Esophagus squamous epithelium (tissue), 5 donors: ENCODE measurements at regions of chr15 and their contacts with region 1.

Region 1: GRCh38 chr15:71455107-71455506 is 339.8 kb downstream of the THSD4 start:
- DNase-seq: no peak
- H3K4me3 ChIP-seq: no peak overlapping the region
- H3K27ac ChIP-seq: peak overlapping the region in 3 of 4 donors; percentile 22 to 51 (median 46)
- H3K4me1 ChIP-seq: peaks cover 9 to 74% (median 35%) of the 10 kb centered on the region in 3 donors
- H3K27me3 ChIP-seq: no peaks in the 10 kb centered on the region
- CTCF ChIP-seq: no peak
- POLR2A ChIP-seq: no peak

Region 2: DNA sequence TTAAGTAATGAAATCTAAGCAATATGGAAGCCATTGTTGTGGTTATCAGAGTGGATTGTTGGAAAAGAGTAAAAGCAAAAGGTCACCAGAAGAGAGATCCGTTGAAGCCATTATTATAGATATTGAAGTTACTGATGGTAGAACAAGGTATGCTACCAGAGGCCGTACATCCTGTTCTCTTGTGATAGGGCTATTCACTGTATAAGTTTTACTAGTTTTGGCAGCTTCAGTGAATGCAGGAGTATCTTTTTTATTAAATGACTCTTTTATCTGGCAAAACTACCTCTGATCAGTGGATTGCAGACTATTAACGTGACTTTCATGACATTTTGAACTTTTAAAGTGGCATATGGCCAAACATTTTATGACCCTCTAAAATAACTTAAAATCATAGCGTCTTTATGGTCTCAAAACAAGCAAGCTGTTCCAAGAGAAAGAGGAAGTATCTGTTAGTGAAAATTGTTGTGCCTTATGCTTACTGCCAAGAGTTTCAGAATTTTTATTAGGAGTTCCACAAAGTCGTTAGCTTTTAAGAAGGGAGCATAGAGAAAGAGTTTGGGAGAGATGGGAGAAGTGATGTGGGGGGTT is 459.6 kb before region 1 on chr15:
- intact Hi-C with region 1: no loop called
- DNase-seq: no peak
- H3K4me3 ChIP-seq: no peak overlapping the region
- H3K27ac ChIP-seq: no peak overlapping the region
- H3K4me1 ChIP-seq: no peaks in the 10 kb centered on the region
- H3K27me3 ChIP-seq: no peaks in the 10 kb centered on the region
- CTCF ChIP-seq: no peak
- POLR2A ChIP-seq: no peak

Region 3: DNA sequence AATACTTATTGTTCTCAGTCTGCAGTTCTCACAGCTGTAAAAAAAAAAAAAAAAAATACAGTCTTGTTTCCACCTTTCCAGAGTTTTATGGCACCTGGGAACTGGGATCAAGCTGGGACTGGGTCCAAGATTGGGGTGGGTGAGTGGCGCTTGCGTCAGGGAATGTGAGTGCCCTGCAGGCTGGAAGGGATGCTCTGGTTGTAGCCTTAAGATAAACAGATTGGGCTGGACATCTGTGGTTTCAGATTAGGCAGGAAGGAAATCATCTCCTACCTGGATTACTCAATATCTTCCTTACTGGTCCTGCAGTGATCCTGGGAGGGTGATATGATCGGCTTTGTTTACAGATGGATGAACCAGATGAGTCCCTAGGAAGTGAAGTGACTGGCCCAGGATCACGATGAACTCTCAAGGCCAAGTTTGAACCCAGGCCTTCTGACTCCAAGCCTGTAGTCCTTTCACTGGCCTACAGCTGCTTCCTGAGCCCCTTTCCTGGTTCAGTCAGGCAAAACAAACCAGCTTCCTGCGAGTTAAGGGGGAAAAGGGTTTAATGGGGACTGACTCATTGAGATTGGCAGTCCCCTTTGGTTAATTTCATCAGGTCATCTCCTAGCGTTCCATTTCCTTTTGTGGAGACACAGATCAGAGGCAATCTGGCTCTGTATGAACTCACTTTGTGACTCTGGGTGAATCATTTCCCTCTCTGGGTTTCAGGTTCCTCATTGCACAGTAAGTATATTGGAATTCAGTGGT is 160.0 kb before region 1 on chr15:
- intact Hi-C with region 1: no loop called
- DNase-seq: no peak
- H3K4me3 ChIP-seq: no peak overlapping the region
- H3K27ac ChIP-seq: peak overlapping the region; percentile 63 to 79 (median 78)
- H3K4me1 ChIP-seq: peaks cover 5 to 28% (median 15%) of the 10 kb centered on the region in 3 donors
- H3K27me3 ChIP-seq: no peaks in the 10 kb centered on the region
- CTCF ChIP-seq: no peak
- POLR2A ChIP-seq: no peak

Region 4: DNA sequence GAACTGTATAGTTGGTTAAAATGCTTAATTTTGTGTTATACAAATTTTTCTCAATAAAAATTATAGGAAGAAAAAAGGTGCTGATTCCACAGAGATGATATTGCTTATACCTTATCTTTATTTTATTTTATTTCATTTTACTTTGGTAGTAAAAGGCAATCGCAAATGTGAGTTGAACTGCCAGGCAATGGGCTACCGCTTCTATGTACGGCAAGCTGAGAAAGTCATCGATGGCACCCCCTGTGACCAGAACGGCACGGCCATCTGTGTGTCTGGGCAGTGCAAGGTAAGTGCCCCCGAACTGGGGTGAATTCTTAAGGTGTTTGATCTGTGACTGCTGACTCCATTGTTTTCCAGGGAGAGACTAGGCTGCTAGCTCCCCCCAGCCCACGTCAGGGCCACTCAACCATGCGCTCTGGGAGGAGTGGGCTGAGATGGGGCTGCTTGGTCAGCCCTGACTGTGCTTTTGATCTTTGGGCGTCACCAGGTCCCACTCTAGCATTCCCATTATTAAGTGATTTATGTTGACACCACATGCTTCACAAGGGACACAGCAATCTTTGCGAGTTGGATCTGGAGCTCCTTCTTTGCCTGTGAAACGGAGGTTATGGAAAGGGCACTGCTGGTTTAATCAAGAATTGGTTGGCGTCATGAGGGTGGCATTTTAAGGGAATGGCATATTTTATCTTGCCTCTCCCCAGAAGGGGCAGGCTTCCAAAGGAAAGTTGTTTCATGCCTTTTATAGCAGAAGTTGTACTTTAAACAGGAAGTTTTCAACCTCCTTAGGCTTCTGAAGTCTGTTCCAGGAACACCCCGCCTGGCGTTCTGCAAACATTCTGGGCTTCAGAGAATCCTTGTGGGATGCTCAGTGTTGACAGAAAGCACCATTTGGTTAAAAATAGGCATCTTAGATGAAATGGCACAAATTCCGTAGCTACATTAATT is 43.3 kb before region 1 on chr15:
- intact Hi-C with region 1: no loop called
- DNase-seq: no peak
- H3K4me3 ChIP-seq: peak overlapping the region in 1 of 4 donors; percentile 26
- H3K27ac ChIP-seq: peak overlapping the region; percentile 30 to 87 (median 72)
- H3K4me1 ChIP-seq: peaks cover 0 to 16% (median 3%) of the 10 kb centered on the region in 3 donors
- H3K27me3 ChIP-seq: no peaks in the 10 kb centered on the region
- CTCF ChIP-seq: peak in 2 of 6 experiments; percentile 23 to 29
- POLR2A ChIP-seq: no peak

Region 5: DNA sequence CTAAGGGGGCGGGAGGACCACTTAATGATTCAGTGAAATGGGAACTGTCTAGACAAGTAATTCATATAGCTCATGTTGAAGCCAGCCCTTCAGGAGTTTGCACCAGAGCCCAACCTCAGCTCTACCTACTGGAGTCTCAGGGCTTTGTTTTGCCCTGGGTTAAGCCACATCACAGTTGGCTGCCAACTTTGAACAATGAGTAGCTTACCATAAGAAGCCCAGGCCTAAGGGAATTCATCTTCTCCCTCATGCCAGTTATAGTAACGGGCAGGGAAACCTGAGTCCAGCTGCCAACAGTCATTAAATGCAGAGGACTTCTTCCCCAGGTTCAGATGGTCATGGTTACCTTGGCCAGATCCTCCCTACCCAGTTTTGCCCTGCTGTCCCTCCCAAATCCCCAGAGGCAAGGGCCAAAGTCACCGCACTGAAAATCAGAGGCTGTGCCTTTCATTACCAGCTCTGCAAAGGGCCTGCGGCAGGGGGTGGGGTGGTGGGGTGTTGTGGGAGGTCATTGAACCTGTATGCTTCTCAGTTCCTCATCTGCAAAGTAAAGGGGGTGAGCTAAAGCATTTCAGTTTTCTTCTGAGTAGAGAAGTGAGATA is 53.1 kb after region 1 on chr15:
- intact Hi-C with region 1: loop called (anchors 10 kb)
- DNase-seq: no peak
- H3K4me3 ChIP-seq: no peak overlapping the region
- H3K27ac ChIP-seq: peak overlapping the region; percentile 21 to 74 (median 60)
- H3K4me1 ChIP-seq: peaks cover 15 to 98% (median 42%) of the 10 kb centered on the region in 3 donors
- H3K27me3 ChIP-seq: no peaks in the 10 kb centered on the region
- CTCF ChIP-seq: no peak
- POLR2A ChIP-seq: no peak